CD8-positive, alpha-beta memory T cell (primary cell): ENCODE measurements at regions of chr1 and their contacts with region 1.

Region 1: DNA sequence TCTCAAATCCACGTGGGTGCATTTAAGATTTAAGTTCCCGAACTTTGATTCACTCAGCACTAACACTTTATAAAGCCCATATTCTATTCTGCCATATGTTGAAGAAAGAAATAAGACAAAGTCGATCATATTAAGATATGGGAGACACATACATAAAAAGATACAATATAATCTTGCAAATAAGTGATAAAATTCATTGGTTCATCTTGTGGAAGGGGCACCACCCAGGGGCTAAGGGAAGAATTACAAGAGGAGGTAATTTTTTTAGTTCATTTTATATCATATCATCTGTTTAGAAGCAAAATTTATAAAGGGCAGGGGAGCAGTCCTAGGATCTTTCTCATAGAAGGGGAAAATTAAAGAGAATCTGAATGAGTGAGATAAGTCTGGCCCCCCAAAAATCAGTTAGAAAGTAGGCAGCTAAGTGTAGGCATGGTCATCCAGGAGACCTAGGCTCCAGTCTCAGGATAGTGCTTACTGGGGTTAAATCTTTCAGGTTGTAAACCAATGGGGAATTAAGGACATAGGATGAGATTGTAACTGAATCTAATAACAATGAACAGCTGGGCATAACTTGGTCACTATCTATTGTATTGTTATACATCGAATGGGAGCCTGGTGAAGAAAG is 124.2 kb upstream of the L1TD1 start:
- DNase-seq: no peak
- H3K4me3 ChIP-seq: no peak overlapping the region
- H3K4me3 Mint-ChIP-seq: no peak overlapping the region
- H3K27ac ChIP-seq: no peak overlapping the region
- H3K27ac Mint-ChIP-seq: peak overlapping the region in 2 of 8 donors; percentile 11 to 32
- H3K4me1 ChIP-seq: no peaks in the 10 kb centered on the region
- H3K4me1 Mint-ChIP-seq: no peaks in the 10 kb centered on the region
- H3K27me3 ChIP-seq: no peaks in the 10 kb centered on the region
- H3K27me3 Mint-ChIP-seq: no peaks in the 10 kb centered on the region

Region 2: GRCh38 chr1:62082456-62083363 is 12.2 kb after region 1 on chr1:
- CTCF ChIA-PET with region 1: interaction called, 12 read pairs
- POLR2A ChIA-PET with region 1: no interaction called
- DNase-seq: peak in 4 of 5 donors; percentile 2 to 49 (median 8)
- H3K4me3 ChIP-seq: no peak overlapping the region
- H3K4me3 Mint-ChIP-seq: no peak overlapping the region
- H3K27ac ChIP-seq: no peak overlapping the region
- H3K27ac Mint-ChIP-seq: peak overlapping the region in 1 of 8 donors; percentile 55
- H3K4me1 ChIP-seq: no peaks in the 10 kb centered on the region
- H3K4me1 Mint-ChIP-seq: no peaks in the 10 kb centered on the region
- H3K27me3 ChIP-seq: no peaks in the 10 kb centered on the region
- H3K27me3 Mint-ChIP-seq: no peaks in the 10 kb centered on the region

Region 3: GRCh38 chr1:62111084-62111483 is 40.6 kb after region 1 on chr1:
- CTCF ChIA-PET with region 1: no interaction called
- POLR2A ChIA-PET with region 1: no interaction called
- DNase-seq: no peak
- H3K4me3 ChIP-seq: no peak overlapping the region
- H3K4me3 Mint-ChIP-seq: no peak overlapping the region
- H3K27ac ChIP-seq: no peak overlapping the region
- H3K27ac Mint-ChIP-seq: no peak overlapping the region
- H3K4me1 ChIP-seq: no peaks in the 10 kb centered on the region
- H3K4me1 Mint-ChIP-seq: no peaks in the 10 kb centered on the region
- H3K27me3 ChIP-seq: no peaks in the 10 kb centered on the region
- H3K27me3 Mint-ChIP-seq: no peaks in the 10 kb centered on the region

Region 4: GRCh38 chr1:62977366-62977765 is 906.9 kb after region 1 on chr1:
- CTCF ChIA-PET with region 1: no interaction called
- POLR2A ChIA-PET with region 1: no interaction called
- DNase-seq: no peak
- H3K4me3 ChIP-seq: no peak overlapping the region
- H3K4me3 Mint-ChIP-seq: no peak overlapping the region
- H3K27ac ChIP-seq: no peak overlapping the region
- H3K27ac Mint-ChIP-seq: no peak overlapping the region
- H3K4me1 ChIP-seq: no peaks in the 10 kb centered on the region
- H3K4me1 Mint-ChIP-seq: no peaks in the 10 kb centered on the region
- H3K27me3 ChIP-seq: no peaks in the 10 kb centered on the region
- H3K27me3 Mint-ChIP-seq: peaks cover 0 to 5% of the 10 kb centered on the region in 2 donors